PC-3 (cell line): ENCODE measurements at regions of chr13 and their contacts with region 1.

Region 1: DNA sequence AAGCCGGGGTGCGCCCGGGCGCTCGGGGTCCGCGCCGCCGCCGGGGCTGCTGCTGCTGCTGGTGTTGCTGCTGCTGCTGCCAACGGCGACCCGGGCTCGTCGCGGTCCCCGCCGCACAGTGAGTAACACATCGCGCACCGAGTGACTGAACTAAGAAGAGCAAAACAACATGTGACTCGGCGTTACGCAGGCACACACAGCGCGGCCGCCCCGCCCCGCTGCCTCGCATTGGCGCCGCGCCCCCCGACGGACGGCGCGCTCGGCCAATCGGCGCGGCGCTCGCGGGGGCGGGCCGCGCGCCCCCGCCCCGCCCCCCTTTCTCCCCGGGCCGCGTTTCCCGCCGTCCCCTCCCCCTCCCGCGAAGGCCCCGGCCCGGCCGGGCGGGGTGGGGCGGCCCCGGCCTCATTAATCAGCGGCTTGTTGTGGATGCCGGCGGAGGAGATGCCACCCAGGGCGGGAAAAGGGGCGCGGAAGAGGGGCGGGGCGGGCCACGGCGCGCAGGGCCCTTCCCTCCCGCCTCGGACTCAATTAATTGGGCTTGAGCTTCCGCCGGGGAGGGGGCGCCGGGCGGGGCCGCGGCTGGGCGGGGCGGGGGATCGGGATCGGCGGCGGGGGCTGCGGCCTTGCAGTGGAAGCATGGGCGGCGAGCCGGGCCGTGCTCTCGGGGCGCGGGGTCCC is at the start of gene IRS2:
- DNase-seq: peak; percentile 84
- ATAC-seq: peak; percentile 63
- H3K4me3 ChIP-seq: peak within 1 kb of the TSS; percentile 70
- H3K27ac ChIP-seq: no peak within 1 kb of the TSS
- H3K4me1 ChIP-seq: peaks cover 14% of the 10 kb centered on the region
- H3K27me3 ChIP-seq: no peaks in the 10 kb centered on the region
- CTCF ChIP-seq: no peak
- total RNA-seq, gene IRS2: 5.6 and 7.5 TPM in 2 replicates

Region 2: GRCh38 chr13:108915634-108916512 is 870.7 kb before region 1 on chr13:
- CTCF ChIA-PET with region 1: no interaction called
- POLR2A ChIA-PET with region 1: no interaction called
- intact Hi-C with region 1: loop called (anchors 5 kb)
- DNase-seq: peak; percentile 86
- ATAC-seq: peak; percentile 60
- H3K4me3 ChIP-seq: peak overlapping the region; percentile 53
- H3K27ac ChIP-seq: peak overlapping the region; percentile 73
- H3K4me1 ChIP-seq: peaks cover 51% of the 10 kb centered on the region
- H3K27me3 ChIP-seq: no peaks in the 10 kb centered on the region
- CTCF ChIP-seq: no peak

Region 3: DNA sequence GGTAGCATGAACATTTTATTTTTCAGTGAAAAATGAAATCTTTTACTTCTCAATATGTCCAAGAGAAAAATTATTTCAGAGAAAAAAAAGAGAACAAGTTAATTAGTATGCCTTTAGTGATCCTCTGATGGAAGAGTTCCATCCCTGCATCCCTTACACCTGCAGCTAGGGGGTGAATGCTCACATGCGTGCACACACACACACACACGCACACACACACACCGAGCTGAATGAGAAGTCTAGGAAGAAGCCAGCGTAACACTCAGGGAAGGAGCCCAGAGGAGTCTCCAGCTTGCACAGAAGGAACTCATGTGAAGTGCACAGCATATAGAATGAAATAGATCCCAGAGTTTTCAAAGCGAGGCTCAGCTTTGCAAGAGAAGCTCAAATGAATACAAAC is 510.7 kb before region 1 on chr13:
- CTCF ChIA-PET with region 1: no interaction called
- POLR2A ChIA-PET with region 1: interaction called, 3 read pairs
- intact Hi-C with region 1: loop called (anchors 10 kb)
- DNase-seq: no peak
- ATAC-seq: 0 out of 2 replicates have a peak, but pooled peaks have one; percentile 6
- H3K4me3 ChIP-seq: no peak overlapping the region
- H3K27ac ChIP-seq: no peak overlapping the region
- H3K4me1 ChIP-seq: peaks cover 34% of the 10 kb centered on the region
- H3K27me3 ChIP-seq: no peaks in the 10 kb centered on the region
- CTCF ChIP-seq: peak; percentile 35; the same call in 1 of the 2 replicates

Region 4: DNA sequence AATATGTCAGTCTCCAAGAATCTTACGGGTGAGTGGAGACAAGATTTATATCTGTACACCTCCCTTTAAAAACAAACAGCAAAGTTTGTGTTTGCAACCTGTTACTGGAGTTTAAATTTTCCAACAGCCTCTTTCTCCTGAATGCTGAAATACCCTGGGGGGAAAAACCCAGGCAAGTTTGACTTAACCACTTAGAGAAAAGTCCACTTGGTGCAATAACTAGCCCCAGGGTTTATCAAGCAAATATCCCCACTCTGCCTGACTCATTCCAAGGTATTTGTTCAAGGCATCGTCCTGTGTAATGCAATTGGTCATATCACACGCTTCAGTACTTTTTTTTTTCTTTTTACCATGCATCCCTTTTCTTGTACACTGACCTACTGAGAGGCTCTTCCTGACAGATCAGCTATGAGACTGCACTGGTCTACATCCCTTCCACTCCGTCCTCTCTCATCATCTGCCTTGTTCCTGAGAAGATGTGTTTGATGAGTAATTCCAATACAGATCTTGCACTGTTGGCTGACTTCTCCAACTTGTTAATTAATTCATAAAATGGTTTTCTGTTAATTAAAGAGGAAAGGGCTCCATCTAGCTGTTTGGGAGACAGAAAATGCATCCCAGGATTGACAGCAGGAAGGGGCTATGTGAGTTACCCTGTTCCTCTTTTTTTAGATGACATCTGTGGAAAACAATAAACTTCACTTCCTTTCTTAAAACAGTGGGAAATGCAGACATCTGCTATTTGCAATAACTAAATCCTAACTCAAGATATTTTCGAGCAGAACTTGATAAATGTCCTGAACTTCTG is 212.3 kb after region 1 on chr13:
- CTCF ChIA-PET with region 1: no interaction called
- POLR2A ChIA-PET with region 1: no interaction called
- intact Hi-C with region 1: loop called (anchors 2 kb)
- DNase-seq: peak; percentile 97
- ATAC-seq: peak; percentile 85
- H3K4me3 ChIP-seq: no peak overlapping the region
- H3K27ac ChIP-seq: peak overlapping the region; percentile 74
- H3K4me1 ChIP-seq: peaks cover 52% of the 10 kb centered on the region
- H3K27me3 ChIP-seq: no peaks in the 10 kb centered on the region
- CTCF ChIP-seq: 0 out of 2 replicates have a peak, but pooled peaks have one; percentile 30

Region 5: DNA sequence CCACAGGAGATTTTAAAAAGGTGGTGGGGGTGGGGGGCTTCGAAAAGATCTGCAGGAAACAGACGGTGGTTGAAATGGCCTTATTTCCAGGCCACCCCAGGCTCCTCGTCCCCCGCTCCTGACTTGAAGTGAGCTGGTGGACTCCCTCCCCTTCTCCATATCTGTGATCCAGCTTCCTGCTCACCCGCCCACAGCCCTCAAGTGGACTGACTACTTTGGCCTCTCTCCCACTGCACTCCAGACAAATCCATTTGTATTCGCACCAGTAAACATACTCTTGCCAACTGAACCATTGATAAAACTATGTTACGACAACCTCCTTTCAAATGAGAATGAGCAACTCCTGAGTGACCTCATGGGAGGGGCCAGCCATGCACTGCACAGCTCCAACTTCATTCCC is 260.9 kb after region 1 on chr13:
- CTCF ChIA-PET with region 1: no interaction called
- POLR2A ChIA-PET with region 1: no interaction called
- intact Hi-C with region 1: no loop called
- DNase-seq: peak; percentile 10
- ATAC-seq: no peak
- H3K4me3 ChIP-seq: no peak overlapping the region
- H3K27ac ChIP-seq: no peak overlapping the region
- H3K4me1 ChIP-seq: no peaks in the 10 kb centered on the region
- H3K27me3 ChIP-seq: no peaks in the 10 kb centered on the region
- CTCF ChIP-seq: no peak

Region 6: GRCh38 chr13:110099922-110100321 is 313.3 kb after region 1 on chr13:
- CTCF ChIA-PET with region 1: no interaction called
- POLR2A ChIA-PET with region 1: interaction called, 13 read pairs
- intact Hi-C with region 1: no loop called
- DNase-seq: no peak
- ATAC-seq: no peak
- H3K4me3 ChIP-seq: no peak overlapping the region
- H3K27ac ChIP-seq: no peak overlapping the region
- H3K4me1 ChIP-seq: peaks cover 10% of the 10 kb centered on the region
- H3K27me3 ChIP-seq: no peaks in the 10 kb centered on the region
- CTCF ChIP-seq: no peak